ENCODE measurements at regions of chr1 and their contacts with region 1.

Region 1: DNA sequence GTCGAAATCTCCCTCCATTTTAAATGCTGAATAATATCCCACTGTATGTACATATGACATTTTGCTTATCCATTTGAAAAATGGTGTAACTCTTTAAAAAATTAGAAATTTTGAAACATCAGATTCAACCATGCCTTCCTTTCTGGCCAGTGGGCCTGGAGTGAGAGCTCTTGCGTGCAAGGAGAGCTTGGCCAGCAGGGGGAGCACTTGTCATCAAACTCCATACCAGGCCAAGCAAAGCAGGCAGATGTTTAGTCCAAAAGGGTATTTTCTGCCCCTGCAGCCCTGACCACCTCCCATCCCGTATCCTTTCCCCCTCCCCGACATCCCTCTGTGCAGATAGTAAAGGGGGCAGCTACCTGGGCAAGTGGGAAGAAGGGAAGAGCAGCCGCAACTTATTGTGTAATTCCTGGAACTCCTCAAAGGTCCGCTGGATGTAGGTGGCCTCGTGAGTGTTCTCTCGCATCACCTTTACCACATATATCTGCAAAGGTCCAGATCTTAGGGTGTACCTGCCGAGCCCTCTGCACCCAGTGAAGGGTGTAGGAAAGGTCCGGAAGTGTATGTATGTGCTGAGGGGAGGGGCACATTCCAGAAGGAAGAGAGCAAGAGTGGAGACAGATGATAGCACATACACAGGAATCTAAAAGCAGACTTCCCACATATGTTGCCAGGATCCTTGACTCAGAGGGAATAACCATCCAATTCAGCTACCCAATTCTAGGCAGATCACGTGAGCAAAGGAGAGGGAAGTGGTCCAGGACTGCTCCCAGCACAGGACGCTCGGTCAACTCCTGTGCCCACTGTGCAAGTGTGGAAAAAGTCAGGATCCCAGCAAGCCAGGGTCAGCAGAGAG is 19.9 kb upstream of the PPP1R15B start:
- DNase-seq: peak; percentile 84
- ATAC-seq: peak; percentile 90
- H3K4me3 Mint-ChIP-seq: no peak overlapping the region
- H3K27ac Mint-ChIP-seq: peak overlapping the region; percentile 69; the same call in 1 of the 2 replicates
- H3K4me1 Mint-ChIP-seq: no peaks in the 10 kb centered on the region
- H3K27me3 Mint-ChIP-seq: no peaks in the 10 kb centered on the region
- CTCF ChIP-seq: peak; percentile 89

Region 2: GRCh38 chr1:204363335-204364124 is 68.0 kb before region 1 on chr1:
- CTCF ChIA-PET with region 1: no interaction called
- POLR2A ChIA-PET with region 1: no interaction called
- DNase-seq: peak; percentile 73
- ATAC-seq: peak; percentile 43
- H3K4me3 Mint-ChIP-seq: peak overlapping the region; percentile 56
- H3K27ac Mint-ChIP-seq: no peak overlapping the region
- H3K4me1 Mint-ChIP-seq: peaks cover 19% of the 10 kb centered on the region
- H3K27me3 Mint-ChIP-seq: peaks cover 20% of the 10 kb centered on the region
- CTCF ChIP-seq: peak; percentile 98

Region 3: DNA sequence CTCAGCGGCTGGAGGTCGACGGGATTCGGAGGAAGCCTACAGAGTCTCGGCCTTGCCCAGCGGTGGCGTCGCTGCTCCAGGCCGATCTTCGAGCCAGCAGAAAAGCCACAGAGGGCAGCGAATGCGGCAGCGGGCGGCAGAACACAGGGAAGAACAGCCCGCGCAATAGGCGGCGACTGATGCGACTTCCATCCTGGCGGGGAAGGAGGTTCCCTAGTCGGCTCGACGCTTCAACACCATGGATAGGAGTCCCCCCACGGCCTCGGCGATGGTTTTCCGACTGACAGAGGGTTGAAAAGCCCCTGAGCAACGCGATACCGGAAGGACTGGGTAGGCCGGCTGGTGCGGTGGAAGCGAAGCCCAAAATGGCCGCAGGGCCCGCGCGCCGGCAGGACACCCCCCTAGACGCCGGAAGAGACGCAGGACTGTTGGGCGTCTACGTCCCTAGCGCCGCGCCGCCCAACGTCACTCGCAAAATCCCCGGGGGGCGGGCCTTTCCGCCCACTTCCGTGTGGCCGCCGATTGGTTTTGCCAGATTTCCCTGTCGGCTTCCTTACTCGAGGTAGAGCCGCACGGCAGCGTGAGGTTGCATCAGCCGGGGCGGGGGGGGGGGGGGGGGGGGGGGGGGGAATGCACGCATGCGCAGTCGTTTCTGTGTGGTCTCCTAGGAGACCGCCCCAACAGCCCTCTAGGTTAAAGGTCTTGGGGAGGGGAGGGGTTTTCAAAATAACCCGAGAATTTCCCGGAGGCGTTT is 19.9 kb before region 1 on chr1 and contains the start of gene PPP1R15B:
- CTCF ChIA-PET with region 1: interaction called, 10 read pairs
- POLR2A ChIA-PET with region 1: interaction called, 3 read pairs
- DNase-seq: peak; percentile 97
- ATAC-seq: peak; percentile 93
- H3K4me3 Mint-ChIP-seq: peak within 1 kb of the TSS; percentile 100
- H3K27ac Mint-ChIP-seq: peak within 1 kb of the TSS; percentile 100
- H3K4me1 Mint-ChIP-seq: peaks cover 12% of the 10 kb centered on the region
- H3K27me3 Mint-ChIP-seq: no peaks in the 10 kb centered on the region
- CTCF ChIP-seq: no peak
- total RNA-seq, gene PPP1R15B: 43.7 to 47.7 TPM (median 44.6 TPM) in 3 replicates

Region 4: DNA sequence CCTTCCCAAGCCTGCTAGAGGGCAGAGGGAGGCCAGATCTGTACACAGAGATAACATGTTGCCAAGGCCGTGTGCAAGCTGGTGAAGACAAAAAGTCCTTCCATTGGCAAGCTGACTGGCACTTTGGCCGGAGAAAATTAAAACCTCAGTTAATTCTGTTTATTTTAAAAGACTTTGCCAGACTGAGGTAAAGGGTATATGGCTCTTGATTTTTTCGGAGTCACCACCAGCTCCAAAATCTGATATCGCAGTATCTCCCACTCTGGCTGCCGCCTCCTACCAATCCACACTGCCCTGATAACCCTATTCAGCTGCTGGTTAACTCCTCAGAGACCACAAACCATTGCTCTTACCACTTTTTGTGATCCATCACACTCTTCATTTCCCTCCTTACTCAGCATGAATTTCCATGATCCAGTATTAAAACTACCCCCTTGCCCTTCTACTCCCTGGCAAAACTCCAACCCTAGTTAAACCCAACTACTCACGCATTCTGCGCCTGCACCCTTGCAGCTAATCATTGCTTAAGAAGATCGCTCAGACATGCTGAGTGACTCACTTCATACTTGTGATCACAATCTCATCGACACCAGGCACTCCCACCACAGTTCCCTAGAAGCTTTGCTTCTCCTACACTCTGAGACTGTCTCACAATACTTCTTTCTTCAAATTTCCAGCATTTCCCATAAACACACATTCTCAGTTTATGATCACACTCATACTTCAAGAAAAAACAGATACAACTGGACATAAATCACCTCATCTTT is 14.1 kb before region 1 on chr1:
- CTCF ChIA-PET with region 1: interaction called, 13 read pairs
- POLR2A ChIA-PET with region 1: interaction called, 3 read pairs
- DNase-seq: no peak
- ATAC-seq: no peak
- H3K4me3 Mint-ChIP-seq: no peak overlapping the region
- H3K27ac Mint-ChIP-seq: peak overlapping the region; percentile 75
- H3K4me1 Mint-ChIP-seq: peaks cover 17% of the 10 kb centered on the region
- H3K27me3 Mint-ChIP-seq: no peaks in the 10 kb centered on the region
- CTCF ChIP-seq: no peak

Region 5: GRCh38 chr1:204465546-204466415 is 34.2 kb after region 1 on chr1:
- CTCF ChIA-PET with region 1: interaction called, 13 read pairs
- POLR2A ChIA-PET with region 1: no interaction called
- DNase-seq: no peak
- ATAC-seq: no peak
- H3K4me3 Mint-ChIP-seq: no peak overlapping the region
- H3K27ac Mint-ChIP-seq: peak overlapping the region; percentile 54; the same call in 1 of the 2 replicates
- H3K4me1 Mint-ChIP-seq: peaks cover 11% of the 10 kb centered on the region; the same call in 1 of the 2 replicates
- H3K27me3 Mint-ChIP-seq: no peaks in the 10 kb centered on the region
- CTCF ChIP-seq: no peak

Region 6: GRCh38 chr1:204480515-204480914 is 49.0 kb after region 1 on chr1:
- CTCF ChIA-PET with region 1: interaction called, 19 read pairs
- POLR2A ChIA-PET with region 1: no interaction called
- DNase-seq: no peak
- ATAC-seq: no peak
- H3K4me3 Mint-ChIP-seq: no peak overlapping the region
- H3K27ac Mint-ChIP-seq: no peak overlapping the region
- H3K4me1 Mint-ChIP-seq: peaks cover 61% of the 10 kb centered on the region
- H3K27me3 Mint-ChIP-seq: no peaks in the 10 kb centered on the region; the same call in 1 of the 2 replicates
- CTCF ChIP-seq: no peak

Region 7: DNA sequence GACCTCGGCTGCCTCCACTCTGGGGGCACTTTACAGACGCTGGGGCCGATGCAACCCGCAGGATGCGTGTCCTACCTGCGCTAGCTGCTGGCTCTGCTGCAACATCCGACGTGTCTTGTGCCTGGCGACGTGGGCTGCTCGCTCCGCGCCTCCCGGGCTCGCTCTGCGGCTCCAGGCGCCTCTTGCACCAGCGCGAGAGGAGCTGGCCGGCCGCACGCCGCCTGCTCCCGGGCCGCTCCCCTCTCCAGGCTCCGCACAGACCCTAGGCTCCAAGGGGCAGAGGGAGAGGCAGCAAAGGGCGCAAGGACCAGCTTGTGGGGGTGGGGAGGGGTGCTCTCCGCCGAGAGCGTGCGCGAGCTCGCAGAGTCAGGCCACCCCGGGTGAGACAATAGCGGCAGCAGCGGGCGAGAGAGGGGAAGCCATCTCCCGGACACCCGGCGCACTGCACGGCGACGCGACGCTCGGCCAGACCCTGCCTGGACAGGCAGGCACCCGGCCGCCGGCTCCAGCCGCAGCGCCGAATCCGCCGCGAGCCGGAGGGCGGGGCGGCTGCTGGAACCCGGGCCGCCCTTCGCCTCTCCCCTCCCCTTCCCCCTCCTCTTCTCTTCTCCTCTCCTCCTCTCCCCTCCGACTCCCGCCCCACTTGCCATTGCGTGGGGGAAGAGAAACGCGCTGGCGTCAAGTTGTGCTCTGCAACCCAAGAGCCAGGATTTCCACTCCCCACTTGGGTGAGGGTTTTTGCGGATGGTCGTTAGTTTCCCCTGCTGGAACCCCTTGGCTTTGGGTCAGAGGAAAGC is 62.9 kb after region 1 on chr1 and contains the start of gene PIK3C2B:
- CTCF ChIA-PET with region 1: interaction called, 47 read pairs
- POLR2A ChIA-PET with region 1: no interaction called
- DNase-seq: peak; percentile 86
- ATAC-seq: peak; percentile 91
- H3K4me3 Mint-ChIP-seq: peak within 1 kb of the TSS; percentile 93
- H3K27ac Mint-ChIP-seq: peak within 1 kb of the TSS; percentile 64
- H3K4me1 Mint-ChIP-seq: peaks cover 33% of the 10 kb centered on the region
- H3K27me3 Mint-ChIP-seq: peaks cover 5% of the 10 kb centered on the region
- CTCF ChIP-seq: no peak
- total RNA-seq, gene PIK3C2B: 20.8 to 27.7 TPM (median 22.6 TPM) in 3 replicates

Region 8: GRCh38 chr1:204506961-204507387 is 75.4 kb after region 1 on chr1:
- CTCF ChIA-PET with region 1: interaction called, 56 read pairs
- POLR2A ChIA-PET with region 1: no interaction called
- DNase-seq: peak; percentile 84
- ATAC-seq: peak; percentile 75
- H3K4me3 Mint-ChIP-seq: peak overlapping the region; percentile 96
- H3K27ac Mint-ChIP-seq: peak overlapping the region; percentile 98
- H3K4me1 Mint-ChIP-seq: peaks cover 11% of the 10 kb centered on the region
- H3K27me3 Mint-ChIP-seq: peaks cover 3% of the 10 kb centered on the region; the same call in 1 of the 2 replicates
- CTCF ChIP-seq: no peak

Measured in WTC11 (cell line).